RWPE1 (cell line): ENCODE measurements at regions of chr6 and their contacts with region 1.

Region 1: GRCh38 chr6:151014404-151015100 is 149.1 kb downstream of the MTHFD1L start:
- DNase-seq: peak; percentile 60
- H3K27ac ChIP-seq: no peak overlapping the region
- CTCF ChIP-seq: peak; percentile 97

Region 2: GRCh38 chr6:151330134-151330696 is 315.7 kb after region 1 on chr6:
- CTCF ChIA-PET with region 1: interaction called, 79 read pairs
- POLR2A ChIA-PET with region 1: no interaction called
- DNase-seq: no peak
- H3K27ac ChIP-seq: no peak overlapping the region
- CTCF ChIP-seq: no peak